ENCODE measurements at regions of chr3 and their contacts with region 1.

Region 1: DNA sequence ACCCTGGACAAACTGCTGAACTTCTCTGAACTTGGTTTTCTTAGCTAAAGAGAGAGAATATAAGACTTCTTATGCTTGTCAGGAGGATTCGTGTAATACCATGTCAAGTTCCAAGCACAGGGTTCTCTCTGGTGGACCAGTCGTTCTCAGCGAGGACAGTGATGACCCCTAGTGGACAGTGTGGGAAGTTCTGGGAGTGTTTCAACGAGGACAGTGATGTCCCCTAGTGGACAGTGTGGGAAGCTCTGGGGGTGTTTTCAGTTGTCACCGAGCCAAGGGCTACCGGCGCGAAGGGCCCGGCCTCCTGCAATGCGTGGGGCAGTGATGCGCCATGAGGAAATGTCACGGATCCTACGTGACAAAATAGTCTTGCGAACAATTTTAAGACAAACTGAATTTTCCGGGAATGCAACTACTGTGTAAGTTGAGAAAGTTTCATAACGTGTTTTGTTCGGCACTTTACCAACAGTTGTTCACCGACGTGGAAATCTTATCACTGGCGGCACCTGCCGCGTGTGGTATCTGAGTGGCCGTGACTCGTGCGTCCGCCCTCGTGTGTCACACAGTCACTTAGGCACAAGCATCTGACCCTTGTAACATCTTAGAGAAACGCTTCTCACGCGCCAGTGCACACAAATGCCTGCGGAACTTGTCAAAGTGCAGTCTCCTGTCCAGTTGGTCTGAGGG is 39.3 kb upstream of the MUC4 start:
- DNase-seq: peak; percentile 69 to 88
- ATAC-seq: peak; percentile 80 to 83
- H3K4me3 ChIP-seq: no peak overlapping the region
- H3K27ac ChIP-seq: no peak overlapping the region
- H3K4me1 ChIP-seq: peaks cover 14% of the 10 kb centered on the region
- CTCF ChIP-seq: peak; percentile 99
- EP300 ChIP-seq: no peak
- POLR2A ChIP-seq: no peak
- RAD21 ChIP-seq: peak; percentile 89 to 90

Region 2: GRCh38 chr3:195811756-195812155 is 39.2 kb before region 1 on chr3 and contains the start of gene MUC4:
- CTCF ChIA-PET with region 1: interaction called, 10 read pairs
- POLR2A ChIA-PET with region 1: no interaction called
- DNase-seq: no peak
- ATAC-seq: no peak
- H3K4me3 ChIP-seq: no peak within 1 kb of the TSS
- H3K27ac ChIP-seq: no peak within 1 kb of the TSS
- H3K4me1 ChIP-seq: 0 out of 3 replicates have a peak, but pooled peaks cover 4% of the 10 kb centered on the region
- CTCF ChIP-seq: no peak
- EP300 ChIP-seq: no peak
- POLR2A ChIP-seq: no peak
- RAD21 ChIP-seq: no peak
- polyA plus RNA-seq, gene MUC4: 0.04 TPM in 1 of 2 replicates, not detected in the other

Region 3: GRCh38 chr3:195839282-195840010 is 11.6 kb before region 1 on chr3:
- CTCF ChIA-PET with region 1: interaction called, 32 read pairs
- POLR2A ChIA-PET with region 1: no interaction called
- DNase-seq: no peak
- ATAC-seq: 0 out of 6 replicates have a peak, but pooled peaks of 1 of the 2 experiments have one; percentile 48
- H3K4me3 ChIP-seq: no peak overlapping the region
- H3K27ac ChIP-seq: no peak overlapping the region
- H3K4me1 ChIP-seq: no peaks in the 10 kb centered on the region; the same call in 2 of the 3 replicates
- CTCF ChIP-seq: no peak
- EP300 ChIP-seq: no peak
- POLR2A ChIP-seq: no peak
- RAD21 ChIP-seq: no peak

Region 4: DNA sequence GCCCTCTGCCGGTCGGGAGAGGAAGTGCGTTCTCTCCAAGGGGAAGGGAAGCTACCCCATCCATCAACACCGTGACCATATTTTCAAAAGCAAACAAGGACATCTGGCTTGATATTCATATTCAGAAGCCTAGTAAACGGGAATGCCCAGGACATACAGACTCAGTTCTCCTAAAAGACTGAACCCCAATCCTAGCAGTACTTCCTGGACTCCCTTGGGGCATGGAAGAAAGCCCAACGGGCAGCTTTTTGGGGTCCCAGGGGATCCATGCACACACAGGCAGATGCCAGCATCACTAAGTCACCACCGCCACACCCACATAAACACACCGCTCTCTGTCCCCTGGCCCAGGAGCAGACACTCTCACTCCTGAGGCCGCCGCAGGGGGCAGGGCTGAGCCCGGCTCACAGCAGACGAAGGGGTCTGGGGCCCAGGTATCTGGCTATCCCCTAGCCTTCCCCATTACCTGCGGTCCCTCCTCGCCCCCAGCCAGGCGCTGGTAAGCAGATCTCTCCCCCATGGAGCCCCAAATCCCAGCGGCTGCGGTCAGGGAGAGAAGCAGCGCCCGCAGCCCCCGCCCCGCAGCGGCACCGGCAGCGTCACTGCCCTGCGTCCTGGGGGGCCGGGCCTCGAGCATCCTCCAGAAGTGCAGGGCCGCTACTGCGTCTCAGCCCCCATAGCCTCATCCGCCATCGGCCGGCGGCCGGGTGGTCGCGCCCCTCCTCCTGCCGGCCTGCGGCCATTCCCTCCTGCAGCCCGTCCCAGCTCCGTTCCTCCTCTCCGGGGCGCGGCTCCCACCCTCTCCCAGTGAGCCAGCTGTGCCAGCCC is 44.0 kb after region 1 on chr3:
- CTCF ChIA-PET with region 1: interaction called, 206 read pairs
- POLR2A ChIA-PET with region 1: no interaction called
- DNase-seq: peak; percentile 78 to 79
- ATAC-seq: peak; percentile 83 to 84
- H3K4me3 ChIP-seq: peak overlapping the region; percentile 77
- H3K27ac ChIP-seq: peak overlapping the region; percentile 91 to 96
- H3K4me1 ChIP-seq: peaks cover 18% of the 10 kb centered on the region
- CTCF ChIP-seq: peak; percentile 75
- EP300 ChIP-seq: no peak
- POLR2A ChIP-seq: no peak
- RAD21 ChIP-seq: peak; percentile 77 to 81

Measured in A549 (cell line).